Activated T-helper 1 cell treated with anti-CD3 and anti-CD28 coated beads, Interleukin-12 subunit alpha, Interleukin-12 subunit beta, Interleukin-2, Interleukin-4 antibody, amounts not matched to agents 30 ng/mL and 10 ng/mL and 1 ng/mL, durations not matched to agents 14 hours and 24 hours and 36 hours (primary cell): ENCODE measurements at regions of chr2 and their contacts with region 1.

Region 1: DNA sequence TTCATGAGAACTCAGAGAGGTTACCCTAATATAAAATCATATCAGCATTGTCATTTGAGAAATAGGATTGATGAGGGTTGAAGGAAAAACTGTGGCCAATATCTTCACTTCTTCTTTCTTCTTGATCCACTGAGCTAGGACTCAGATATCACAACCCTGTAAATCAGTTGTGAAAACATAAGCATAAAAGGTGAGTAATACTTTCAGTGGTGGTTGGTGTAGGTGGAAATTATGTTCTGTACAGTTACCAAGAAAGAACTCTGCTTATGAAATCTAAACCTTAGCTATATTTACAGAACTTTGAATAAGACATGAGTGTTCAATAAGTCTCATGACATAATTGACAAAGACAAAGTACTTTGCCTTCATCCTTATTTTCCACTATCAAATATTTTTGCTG is 56.3 kb downstream of the PAX3 start:
- DNase-seq: no peak
- H3K4me3 Mint-ChIP-seq: no peak overlapping the region
- H3K27ac Mint-ChIP-seq: no peak overlapping the region
- H3K4me1 Mint-ChIP-seq: no peaks in the 10 kb centered on the region
- H3K27me3 Mint-ChIP-seq: peaks cover 32% of the 10 kb centered on the region

Region 2: GRCh38 chr2:221529943-221530652 is 712.4 kb before region 1 on chr2:
- intact Hi-C with region 1: no loop called
- DNase-seq: no peak
- H3K4me3 Mint-ChIP-seq: peak overlapping the region; percentile 43
- H3K27ac Mint-ChIP-seq: peak overlapping the region; percentile 5
- H3K4me1 Mint-ChIP-seq: peaks cover 39% of the 10 kb centered on the region
- H3K27me3 Mint-ChIP-seq: no peaks in the 10 kb centered on the region

Region 3: GRCh38 chr2:222298311-222299150 is 56.0 kb after region 1 on chr2 and contains the start of gene PAX3:
- intact Hi-C with region 1: loop called (anchors 5 kb)
- DNase-seq: no peak
- H3K4me3 Mint-ChIP-seq: no peak within 1 kb of the TSS
- H3K27ac Mint-ChIP-seq: peak within 1 kb of the TSS; percentile 77
- H3K4me1 Mint-ChIP-seq: peaks cover 5% of the 10 kb centered on the region
- H3K27me3 Mint-ChIP-seq: peaks cover 88% of the 10 kb centered on the region
- total RNA-seq, gene PAX3: not detected in 2 replicates